ENCODE measurements at regions of chr6 and their contacts with region 1.

Region 1: GRCh38 chr6:53725791-53726431 is 60.4 kb upstream of the KLHL31 start:
- DNase-seq: peak; percentile 80
- H3K4me3 ChIP-seq: peak overlapping the region in 1 of 2 experiments; percentile 34; a peak in 1 of 4 replicates
- H3K27ac ChIP-seq: no peak overlapping the region
- H3K4me1 ChIP-seq: no peaks in the 10 kb centered on the region
- H3K27me3 ChIP-seq: peaks cover 10% of the 10 kb centered on the region; the same call in 1 of the 2 replicates
- CTCF ChIP-seq: peak; percentile 96
- EP300 ChIP-seq: no peak
- RAD21 ChIP-seq: peak; percentile 71

Region 2: DNA sequence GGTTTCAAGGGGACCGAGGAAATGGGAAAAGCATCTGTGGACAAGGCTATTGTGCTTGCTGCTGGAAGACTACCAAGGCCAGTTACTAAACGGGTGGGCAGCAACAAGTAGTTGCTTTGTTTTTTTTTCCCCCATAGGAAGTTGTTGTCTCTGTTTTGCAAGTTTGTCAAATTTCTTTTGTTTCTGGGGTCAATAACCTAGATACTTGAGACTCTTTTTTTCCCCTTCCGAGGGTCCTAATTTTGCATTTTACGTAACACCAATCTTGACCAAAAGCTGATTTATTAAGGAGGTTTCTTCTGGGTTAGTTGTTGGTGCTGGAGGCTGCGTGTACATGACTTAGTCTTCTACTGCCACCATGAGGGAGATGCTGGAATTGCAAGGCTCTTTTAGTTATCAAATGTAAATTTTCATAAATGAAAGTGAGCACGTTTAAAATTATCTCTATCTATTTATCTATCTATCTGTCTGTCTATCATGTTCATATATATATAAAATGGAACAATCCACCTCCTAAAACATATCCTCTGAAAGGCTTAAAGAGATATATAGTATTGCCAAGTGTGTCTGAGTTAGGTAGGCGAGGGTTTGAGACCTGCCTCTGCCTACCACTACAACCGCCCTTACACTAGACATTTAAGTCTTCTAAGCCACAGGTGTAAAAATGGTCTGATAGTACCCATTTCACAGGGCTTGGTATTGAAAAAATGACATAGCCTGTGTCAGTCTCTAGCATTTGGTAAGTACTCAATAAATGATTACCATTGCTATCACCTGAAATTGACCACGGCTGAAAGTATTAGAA is 241.2 kb before region 1 on chr6:
- CTCF ChIA-PET with region 1: interaction called, 21 read pairs
- POLR2A ChIA-PET with region 1: no interaction called
- DNase-seq: peak; percentile 27
- H3K4me3 ChIP-seq: peak overlapping the region in 1 of 2 experiments; percentile 19; a peak in 1 of 4 replicates
- H3K27ac ChIP-seq: no peak overlapping the region
- H3K4me1 ChIP-seq: peaks cover 0 to 8% of the 10 kb centered on the region in 2 experiments; a peak in 2 of 4 replicates
- H3K27me3 ChIP-seq: peaks cover 17% of the 10 kb centered on the region
- CTCF ChIP-seq: peak; percentile 99
- EP300 ChIP-seq: no peak
- RAD21 ChIP-seq: peak; percentile 98

Region 3: DNA sequence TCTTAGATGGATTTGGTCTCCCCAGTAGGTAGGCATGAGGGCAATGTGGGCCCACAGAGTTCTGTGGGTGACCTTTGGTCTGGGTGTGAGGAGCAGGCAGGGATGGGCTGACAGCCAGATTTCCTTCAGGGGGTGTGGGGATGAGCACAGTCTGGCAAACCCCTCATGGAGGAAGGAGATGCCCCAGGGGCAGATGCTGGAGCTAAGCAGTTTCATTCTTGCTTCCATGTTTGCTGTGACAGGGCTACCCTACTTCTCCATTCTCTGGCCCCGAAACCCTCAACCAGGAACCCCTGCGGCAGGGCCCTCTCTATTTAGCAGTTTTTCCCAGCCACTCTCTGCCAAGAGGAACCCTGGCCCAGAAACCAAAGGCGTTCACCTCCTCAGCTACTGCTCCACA is 221.4 kb before region 1 on chr6:
- CTCF ChIA-PET with region 1: interaction called, 12 read pairs
- POLR2A ChIA-PET with region 1: no interaction called
- DNase-seq: no peak
- H3K4me3 ChIP-seq: no peak overlapping the region
- H3K27ac ChIP-seq: no peak overlapping the region
- H3K4me1 ChIP-seq: no peaks in the 10 kb centered on the region; a peak in 1 of 4 replicates
- H3K27me3 ChIP-seq: no peaks in the 10 kb centered on the region
- CTCF ChIP-seq: no peak
- EP300 ChIP-seq: no peak
- RAD21 ChIP-seq: no peak

Region 4: DNA sequence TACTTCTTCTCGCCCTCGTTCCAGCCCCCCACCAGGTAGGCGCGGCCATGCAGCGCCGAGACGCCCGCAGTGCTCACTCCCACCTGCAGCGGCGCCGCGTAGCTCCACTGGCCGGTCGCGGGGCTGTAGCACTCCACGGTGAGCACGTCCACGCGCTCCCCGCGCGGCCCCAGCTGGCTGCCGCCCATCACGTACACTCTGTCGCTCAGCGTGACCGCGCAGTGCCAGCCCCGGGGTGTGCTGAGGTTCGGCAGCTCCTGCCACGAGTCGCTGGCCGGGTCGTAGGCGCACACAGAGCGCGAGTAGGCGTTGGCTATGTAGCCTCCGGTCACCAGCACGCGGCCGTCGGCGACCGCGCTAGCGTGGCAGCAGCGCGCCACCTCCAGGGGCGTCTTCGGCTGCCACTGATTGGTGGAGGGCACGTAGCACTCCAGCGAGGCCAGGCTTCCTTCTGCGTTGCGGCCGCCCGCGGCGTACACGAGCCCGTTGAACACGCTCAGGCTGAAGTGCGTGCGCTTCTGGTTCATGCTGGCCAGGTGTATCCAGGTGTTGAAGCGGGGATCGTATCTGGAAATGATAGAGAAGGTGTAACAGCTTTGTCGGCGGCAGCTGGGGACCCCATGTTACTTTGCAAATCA is 74.0 kb before region 1 on chr6:
- CTCF ChIA-PET with region 1: interaction called, 14 read pairs
- POLR2A ChIA-PET with region 1: no interaction called
- DNase-seq: peak; percentile 80
- H3K4me3 ChIP-seq: peak overlapping the region; percentile 52 to 56
- H3K27ac ChIP-seq: no peak overlapping the region
- H3K4me1 ChIP-seq: peaks cover 0 to 13% of the 10 kb centered on the region in 2 experiments; a peak in 1 of 4 replicates
- H3K27me3 ChIP-seq: peaks cover 17% of the 10 kb centered on the region
- CTCF ChIP-seq: no peak
- EP300 ChIP-seq: no peak
- RAD21 ChIP-seq: no peak

Region 5: DNA sequence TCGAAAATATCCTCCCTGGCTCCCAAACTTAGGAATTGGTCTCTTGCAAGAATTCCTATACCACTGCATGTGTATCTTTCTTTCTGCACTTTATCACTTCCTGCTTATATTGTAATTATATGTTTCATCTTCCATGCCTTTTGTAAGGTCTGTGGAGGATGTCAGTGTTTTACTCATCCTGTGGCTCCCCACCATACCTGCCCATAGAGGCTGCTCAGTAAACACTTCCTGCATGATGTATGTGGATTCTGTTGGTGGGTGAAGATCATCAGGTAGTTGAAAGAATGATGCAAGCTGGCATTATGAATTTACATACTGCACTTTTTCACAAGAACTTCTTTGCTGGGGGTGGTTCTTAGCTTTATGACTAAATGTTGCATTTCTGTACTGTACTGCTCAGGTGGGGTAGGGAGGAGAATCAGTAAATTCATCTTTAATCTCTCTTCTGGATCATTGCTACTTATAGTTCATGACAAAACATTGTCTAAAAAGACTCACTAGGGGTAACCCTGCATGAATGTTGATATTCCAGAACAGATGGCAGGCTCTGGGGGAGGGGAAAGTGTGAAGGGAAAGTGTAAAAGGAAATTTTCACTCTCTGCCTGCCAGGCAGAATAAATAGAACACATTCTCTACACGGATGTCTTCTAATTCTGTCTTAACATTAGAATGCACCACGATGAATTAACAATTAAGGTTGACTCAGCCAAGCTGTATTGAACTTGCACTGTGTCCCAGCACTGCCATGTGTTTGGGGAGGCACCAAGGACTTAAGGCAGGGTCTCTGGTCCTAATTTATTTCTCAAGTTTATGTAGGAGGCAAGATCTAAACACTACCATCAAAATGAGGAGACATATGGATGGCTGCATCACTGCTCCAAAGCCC is 24.3 kb before region 1 on chr6:
- CTCF ChIA-PET with region 1: interaction called, 154 read pairs
- POLR2A ChIA-PET with region 1: no interaction called
- DNase-seq: no peak
- H3K4me3 ChIP-seq: no peak overlapping the region
- H3K27ac ChIP-seq: no peak overlapping the region
- H3K4me1 ChIP-seq: no peaks in the 10 kb centered on the region
- H3K27me3 ChIP-seq: peaks cover 3% of the 10 kb centered on the region; the same call in 1 of the 2 replicates
- CTCF ChIP-seq: no peak
- EP300 ChIP-seq: no peak
- RAD21 ChIP-seq: no peak

Region 6: GRCh38 chr6:53749985-53750650 is 24.2 kb after region 1 on chr6:
- CTCF ChIA-PET with region 1: interaction called, 11 read pairs
- POLR2A ChIA-PET with region 1: no interaction called
- DNase-seq: no peak
- H3K4me3 ChIP-seq: no peak overlapping the region
- H3K27ac ChIP-seq: no peak overlapping the region
- H3K4me1 ChIP-seq: no peaks in the 10 kb centered on the region; a peak in 1 of 4 replicates
- H3K27me3 ChIP-seq: no peaks in the 10 kb centered on the region
- CTCF ChIP-seq: no peak
- EP300 ChIP-seq: no peak
- RAD21 ChIP-seq: no peak

Measured in SK-N-SH (cell line).